Thyroid gland (tissue), 4 donors: ENCODE measurements at regions of chr19 and their contacts with region 1.

Region 1: DNA sequence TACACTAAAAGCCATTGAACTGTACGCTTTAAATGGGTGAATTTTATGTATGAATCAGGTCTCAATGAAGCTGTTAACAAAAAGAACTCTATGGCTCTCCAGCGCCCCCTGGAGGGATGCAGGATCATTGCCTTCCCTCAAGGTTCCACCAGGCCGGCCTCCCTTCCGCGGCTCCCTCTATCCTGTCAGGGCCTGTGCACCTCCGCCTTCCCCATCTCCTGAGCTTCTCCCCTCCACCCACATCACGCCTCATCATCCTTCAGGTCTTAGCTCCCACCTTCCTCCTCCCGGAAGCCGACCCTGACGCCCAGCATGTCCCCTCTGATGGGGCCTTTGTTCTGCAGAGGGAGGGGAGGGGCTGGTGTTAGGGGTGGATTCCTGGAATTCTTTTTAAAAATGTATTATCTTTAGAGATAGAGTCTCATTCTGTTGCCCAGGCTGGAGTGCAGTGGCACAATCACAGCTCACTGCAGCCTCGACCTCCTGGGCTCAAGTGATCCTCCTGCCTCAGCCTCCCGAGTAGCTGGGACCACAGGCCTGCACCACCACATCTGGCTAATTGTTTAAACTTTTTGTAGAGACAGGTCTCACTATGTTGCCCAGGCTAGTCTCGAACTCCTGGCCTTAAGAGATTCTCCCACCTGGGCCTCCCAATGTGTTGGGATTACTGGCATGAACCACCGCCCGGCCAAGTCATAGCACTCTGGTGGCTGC is 27.7 kb downstream of the MEIS3 start:
- DNase-seq: peak; percentile 58 to 78
- H3K4me3 ChIP-seq: no peak overlapping the region
- H3K27ac ChIP-seq: no peak overlapping the region
- H3K4me1 ChIP-seq: no peaks in the 10 kb centered on the region
- H3K27me3 ChIP-seq: no peaks in the 10 kb centered on the region
- CTCF ChIP-seq: peak; percentile 39 to 87 (median 76)
- POLR2A ChIP-seq: no peak

Region 2: GRCh38 chr19:47296036-47296435 is 95.6 kb before region 1 on chr19:
- intact Hi-C with region 1: loop called (anchors 2 kb)
- DNase-seq: peak; percentile 64 to 68
- H3K4me3 ChIP-seq: no peak overlapping the region
- H3K27ac ChIP-seq: no peak overlapping the region
- H3K4me1 ChIP-seq: no peaks in the 10 kb centered on the region
- H3K27me3 ChIP-seq: no peaks in the 10 kb centered on the region
- CTCF ChIP-seq: peak in 5 of 6 experiments; percentile 47 to 69 (median 58)
- POLR2A ChIP-seq: no peak

Region 3: GRCh38 chr19:47330466-47330869 is 61.2 kb before region 1 on chr19:
- intact Hi-C with region 1: no loop called
- DNase-seq: no peak
- H3K4me3 ChIP-seq: no peak overlapping the region
- H3K27ac ChIP-seq: peak overlapping the region in 2 of 3 donors; percentile 45 to 73
- H3K4me1 ChIP-seq: peaks cover 0 to 5% of the 10 kb centered on the region in 2 donors
- H3K27me3 ChIP-seq: no peaks in the 10 kb centered on the region
- CTCF ChIP-seq: no peak
- POLR2A ChIP-seq: no peak